Activated naive CD4-positive, alpha-beta T cell treated with anti-CD3 and anti-CD28 coated beads for 36 hours (primary cell): ENCODE measurements at regions of chr18 and their contacts with region 1.

Region 1: DNA sequence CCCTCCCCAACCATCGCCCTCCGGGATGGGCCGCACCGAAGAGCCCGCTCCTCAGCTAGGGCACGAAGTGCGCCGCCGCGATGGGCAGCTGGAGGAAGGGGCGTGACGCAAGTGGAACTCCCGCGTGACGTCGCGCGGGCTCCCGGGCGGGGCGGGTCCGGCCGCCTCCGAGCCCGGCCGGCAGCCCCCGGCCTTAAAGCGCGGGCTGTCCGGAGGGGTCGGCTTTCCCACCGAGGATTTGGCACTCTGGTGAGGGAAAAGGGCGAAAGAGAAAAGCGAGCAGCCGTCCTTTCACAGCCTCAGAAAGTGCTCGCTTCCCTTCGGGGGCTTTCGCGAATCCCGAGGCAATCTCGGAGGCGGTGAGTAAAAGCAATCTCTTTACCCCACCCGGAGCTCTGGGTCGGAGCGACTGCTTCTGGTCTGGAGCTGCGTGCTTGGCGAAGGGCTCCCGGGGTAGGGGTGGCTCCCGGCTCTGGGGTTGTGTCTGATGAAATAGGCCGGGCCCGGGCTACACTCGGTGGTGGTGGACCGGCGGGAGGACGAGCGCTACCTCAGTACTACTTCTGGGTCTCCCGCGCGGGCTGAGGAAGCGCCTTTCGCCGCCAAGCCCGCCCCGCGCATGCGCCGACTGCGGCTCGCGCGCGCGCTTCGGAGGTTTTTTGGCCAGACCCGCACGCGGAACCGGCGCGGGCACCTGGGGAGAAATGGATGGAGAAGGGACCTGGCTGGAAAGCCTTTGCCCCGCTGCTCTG is at the start of gene RBBP8:
- DNase-seq: peak; percentile 77
- H3K4me3 Mint-ChIP-seq: peak within 1 kb of the TSS; percentile 85
- H3K27ac Mint-ChIP-seq: peak within 1 kb of the TSS; percentile 93
- H3K4me1 Mint-ChIP-seq: peaks cover 14% of the 10 kb centered on the region
- H3K27me3 Mint-ChIP-seq: no peaks in the 10 kb centered on the region
- total RNA-seq, gene RBBP8: 77.7 to 83.7 TPM

Region 2: DNA sequence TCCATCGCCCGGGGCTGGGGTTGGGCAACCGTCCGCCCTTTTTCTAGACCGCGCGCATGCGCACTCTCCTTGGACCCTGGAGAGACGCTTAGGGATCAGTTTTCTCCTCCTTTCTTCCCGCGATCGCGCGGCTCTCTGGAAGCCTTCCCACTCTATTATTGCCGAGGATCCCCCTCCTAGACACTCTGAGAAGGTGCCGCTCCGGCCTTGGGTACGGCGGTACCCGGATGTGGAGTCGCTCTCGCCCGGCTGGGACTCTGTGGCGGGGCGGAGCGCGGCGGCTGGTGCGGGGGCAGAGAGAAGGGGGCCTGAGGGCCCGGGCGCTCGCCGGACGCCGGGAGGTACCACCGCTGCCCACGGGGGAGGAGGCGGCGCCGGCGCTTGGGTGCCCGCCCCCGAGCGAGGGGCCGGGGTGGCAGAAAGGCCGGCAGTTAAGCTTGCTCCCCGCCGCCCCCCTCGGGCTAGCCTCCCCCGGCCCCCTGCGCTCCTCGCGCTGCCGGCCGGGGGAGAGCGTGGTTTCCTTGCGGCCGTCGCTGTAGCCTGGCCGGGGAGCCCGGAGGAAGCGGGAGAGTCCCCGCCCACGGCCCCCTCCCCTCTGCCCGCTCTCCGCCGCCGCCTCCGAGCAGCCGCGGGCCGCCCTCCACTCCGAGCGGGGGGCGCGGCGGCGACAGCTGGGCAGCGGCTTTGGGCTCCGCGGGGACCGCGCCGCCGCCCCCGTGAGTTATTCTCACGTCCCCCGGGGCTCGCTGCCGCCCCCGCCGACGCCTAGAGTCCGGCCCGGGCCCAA is 1192.5 kb before region 1 on chr18 and contains the start of gene MIB1:
- CTCF ChIA-PET with region 1: no interaction called
- intact Hi-C with region 1: loop called (anchors 5 kb)
- DNase-seq: no peak
- H3K4me3 Mint-ChIP-seq: peak within 1 kb of the TSS; percentile 86
- H3K27ac Mint-ChIP-seq: peak within 1 kb of the TSS; percentile 88
- H3K4me1 Mint-ChIP-seq: peaks cover 27% of the 10 kb centered on the region
- H3K27me3 Mint-ChIP-seq: peaks cover 2% of the 10 kb centered on the region
- total RNA-seq, gene MIB1: 22.8 to 26.2 TPM

Region 3: DNA sequence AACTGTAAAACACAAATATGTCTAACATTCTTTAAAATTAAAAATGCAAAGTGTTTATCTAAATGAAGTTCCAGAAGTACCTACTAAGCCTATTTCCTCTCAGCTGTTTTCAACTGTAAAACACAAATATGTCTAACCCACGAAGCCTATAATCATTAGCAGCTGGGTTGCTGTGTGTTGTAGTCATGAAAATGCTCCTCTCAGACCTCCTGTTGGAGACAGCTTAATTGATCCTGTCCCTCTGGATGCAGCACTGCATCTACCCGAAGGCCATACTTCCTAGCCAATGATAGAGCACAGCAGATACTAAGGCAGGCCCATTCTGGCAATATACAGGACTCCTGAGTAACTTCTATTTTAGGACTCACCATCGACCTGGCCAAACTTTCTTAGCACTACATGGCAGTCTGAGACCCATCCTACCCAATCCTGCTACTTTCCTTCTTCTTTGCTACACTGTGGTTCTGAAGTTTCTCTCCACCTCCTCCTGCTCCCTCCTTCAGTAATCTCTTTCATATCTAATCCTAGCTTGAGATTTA is 92.7 kb before region 1 on chr18:
- CTCF ChIA-PET with region 1: interaction called, 4 read pairs
- intact Hi-C with region 1: loop called (anchors 1 kb)
- DNase-seq: no peak
- H3K4me3 Mint-ChIP-seq: no peak overlapping the region
- H3K27ac Mint-ChIP-seq: no peak overlapping the region
- H3K4me1 Mint-ChIP-seq: no peaks in the 10 kb centered on the region
- H3K27me3 Mint-ChIP-seq: peaks cover 2% of the 10 kb centered on the region

Region 4: GRCh38 chr18:22983175-22983574 is 49.8 kb after region 1 on chr18:
- CTCF ChIA-PET with region 1: interaction called, 13 read pairs
- intact Hi-C with region 1: loop called (anchors 1 kb)
- DNase-seq: no peak
- H3K4me3 Mint-ChIP-seq: no peak overlapping the region
- H3K27ac Mint-ChIP-seq: no peak overlapping the region
- H3K4me1 Mint-ChIP-seq: peaks cover 10% of the 10 kb centered on the region
- H3K27me3 Mint-ChIP-seq: no peaks in the 10 kb centered on the region

Region 5: GRCh38 chr18:23231340-23232021 is 298.1 kb after region 1 on chr18:
- CTCF ChIA-PET with region 1: no interaction called
- intact Hi-C with region 1: loop called (anchors 1 kb)
- DNase-seq: peak; percentile 91
- H3K4me3 Mint-ChIP-seq: no peak overlapping the region
- H3K27ac Mint-ChIP-seq: peak overlapping the region; percentile 94
- H3K4me1 Mint-ChIP-seq: peaks cover 45% of the 10 kb centered on the region
- H3K27me3 Mint-ChIP-seq: no peaks in the 10 kb centered on the region

Region 6: DNA sequence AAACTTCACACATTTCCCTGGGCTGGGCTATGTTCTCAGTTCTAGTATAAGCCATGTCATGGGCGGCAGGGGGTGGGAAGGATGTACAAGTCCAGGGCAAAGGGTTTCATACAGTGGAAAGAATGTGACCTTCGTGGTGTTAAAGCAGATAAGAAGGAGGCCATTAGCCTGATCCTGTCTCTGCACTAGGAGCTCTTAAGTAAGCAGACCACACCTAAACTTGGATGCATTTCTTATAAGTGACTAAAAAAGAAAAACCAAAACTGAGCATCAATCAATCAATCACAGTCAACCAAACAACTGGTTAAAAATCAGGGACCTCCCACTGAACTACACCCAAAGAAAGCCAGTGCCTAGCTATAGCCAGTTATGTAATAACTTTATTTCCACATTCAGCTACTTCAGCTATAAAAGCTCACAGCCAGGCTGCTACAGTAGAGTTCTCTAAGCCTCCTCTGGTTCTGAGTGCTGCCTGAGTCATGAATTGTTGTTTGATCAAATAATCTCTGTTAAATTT is 472.9 kb after region 1 on chr18:
- CTCF ChIA-PET with region 1: interaction called, 6 read pairs
- intact Hi-C with region 1: loop called (anchors 1 kb)
- DNase-seq: no peak
- H3K4me3 Mint-ChIP-seq: no peak overlapping the region
- H3K27ac Mint-ChIP-seq: no peak overlapping the region
- H3K4me1 Mint-ChIP-seq: no peaks in the 10 kb centered on the region
- H3K27me3 Mint-ChIP-seq: no peaks in the 10 kb centered on the region